ENCODE measurements at regions of chr18 and their contacts with region 1.

Region 1: DNA sequence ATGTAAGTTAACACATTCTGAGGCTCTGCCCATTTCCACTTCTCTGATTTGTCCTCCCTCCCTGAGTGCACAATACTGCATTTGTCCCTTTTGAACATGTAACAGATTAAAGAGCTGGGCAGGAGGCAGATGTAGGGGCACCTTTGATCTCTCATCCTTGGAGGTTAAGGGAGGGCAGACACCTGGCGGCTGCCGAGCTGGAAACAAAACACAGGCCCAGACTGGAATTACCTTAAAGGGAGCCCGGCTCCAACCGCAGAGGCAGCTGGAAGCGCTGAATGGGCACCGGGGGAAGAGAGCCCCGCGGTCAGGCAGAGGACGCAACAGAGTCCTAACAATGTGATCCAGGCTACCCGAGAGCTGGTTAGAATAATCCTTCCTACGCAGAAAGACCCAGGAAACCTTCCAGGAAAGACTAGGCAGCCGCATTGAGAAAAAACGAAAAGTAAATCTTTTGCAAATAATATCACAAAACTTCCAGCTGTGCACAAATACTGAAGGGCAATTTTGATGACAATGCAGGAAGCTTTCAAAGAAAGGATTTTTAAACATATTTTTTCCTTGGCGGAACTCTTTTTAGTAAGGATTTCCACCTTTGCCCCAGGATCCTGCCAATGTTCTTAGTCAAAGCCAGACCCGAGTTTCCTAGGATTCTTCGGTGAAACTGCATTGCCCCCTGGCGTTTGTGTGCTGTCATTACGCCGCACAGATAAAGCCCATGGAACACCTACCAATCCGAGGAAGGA is 216.0 kb downstream of the TGIF1 start:
- DNase-seq: peak; percentile 78 to 89
- H3K4me3 ChIP-seq: peak overlapping the region; percentile 45; the same call in 1 of the 2 replicates
- H3K27ac ChIP-seq: peak overlapping the region; percentile 96
- H3K4me1 ChIP-seq: peaks cover 33% of the 10 kb centered on the region
- H3K27me3 ChIP-seq: no peaks in the 10 kb centered on the region
- CTCF ChIP-seq: peak; percentile 97

Region 2: GRCh38 chr18:2932247-2933181 is 733.4 kb before region 1 on chr18:
- CTCF ChIA-PET with region 1: interaction called, 4 read pairs
- POLR2A ChIA-PET with region 1: no interaction called
- intact Hi-C with region 1: loop called (anchors 1 kb)
- DNase-seq: peak; percentile 32 to 52
- H3K4me3 ChIP-seq: no peak overlapping the region
- H3K27ac ChIP-seq: no peak overlapping the region
- H3K4me1 ChIP-seq: no peaks in the 10 kb centered on the region
- H3K27me3 ChIP-seq: no peaks in the 10 kb centered on the region
- CTCF ChIP-seq: peak; percentile 89

Region 3: GRCh38 chr18:3297025-3297984 is 368.6 kb before region 1 on chr18:
- CTCF ChIA-PET with region 1: no interaction called
- POLR2A ChIA-PET with region 1: interaction called, 44 read pairs
- intact Hi-C with region 1: no loop called
- DNase-seq: peak; percentile 94 to 95
- H3K4me3 ChIP-seq: peak overlapping the region; percentile 77
- H3K27ac ChIP-seq: peak overlapping the region; percentile 68
- H3K4me1 ChIP-seq: 0 out of 2 replicates have a peak, but pooled peaks cover 8% of the 10 kb centered on the region
- H3K27me3 ChIP-seq: no peaks in the 10 kb centered on the region
- CTCF ChIP-seq: peak; percentile 72

Region 4: GRCh38 chr18:3411854-3412268 is 254.1 kb before region 1 on chr18:
- CTCF ChIA-PET with region 1: interaction called, 3 read pairs
- POLR2A ChIA-PET with region 1: interaction called, 6 read pairs
- intact Hi-C with region 1: loop called (anchors 1 kb)
- DNase-seq: peak; percentile 72 to 86
- H3K4me3 ChIP-seq: peak overlapping the region; percentile 68
- H3K27ac ChIP-seq: peak overlapping the region; percentile 96
- H3K4me1 ChIP-seq: peaks cover 58% of the 10 kb centered on the region
- H3K27me3 ChIP-seq: no peaks in the 10 kb centered on the region
- CTCF ChIP-seq: no peak

Region 5: GRCh38 chr18:3547891-3548615 is 117.9 kb before region 1 on chr18:
- CTCF ChIA-PET with region 1: no interaction called
- POLR2A ChIA-PET with region 1: no interaction called
- intact Hi-C with region 1: no loop called
- DNase-seq: no peak
- H3K4me3 ChIP-seq: no peak overlapping the region
- H3K27ac ChIP-seq: no peak overlapping the region
- H3K4me1 ChIP-seq: no peaks in the 10 kb centered on the region
- H3K27me3 ChIP-seq: no peaks in the 10 kb centered on the region
- CTCF ChIP-seq: no peak

Region 6: DNA sequence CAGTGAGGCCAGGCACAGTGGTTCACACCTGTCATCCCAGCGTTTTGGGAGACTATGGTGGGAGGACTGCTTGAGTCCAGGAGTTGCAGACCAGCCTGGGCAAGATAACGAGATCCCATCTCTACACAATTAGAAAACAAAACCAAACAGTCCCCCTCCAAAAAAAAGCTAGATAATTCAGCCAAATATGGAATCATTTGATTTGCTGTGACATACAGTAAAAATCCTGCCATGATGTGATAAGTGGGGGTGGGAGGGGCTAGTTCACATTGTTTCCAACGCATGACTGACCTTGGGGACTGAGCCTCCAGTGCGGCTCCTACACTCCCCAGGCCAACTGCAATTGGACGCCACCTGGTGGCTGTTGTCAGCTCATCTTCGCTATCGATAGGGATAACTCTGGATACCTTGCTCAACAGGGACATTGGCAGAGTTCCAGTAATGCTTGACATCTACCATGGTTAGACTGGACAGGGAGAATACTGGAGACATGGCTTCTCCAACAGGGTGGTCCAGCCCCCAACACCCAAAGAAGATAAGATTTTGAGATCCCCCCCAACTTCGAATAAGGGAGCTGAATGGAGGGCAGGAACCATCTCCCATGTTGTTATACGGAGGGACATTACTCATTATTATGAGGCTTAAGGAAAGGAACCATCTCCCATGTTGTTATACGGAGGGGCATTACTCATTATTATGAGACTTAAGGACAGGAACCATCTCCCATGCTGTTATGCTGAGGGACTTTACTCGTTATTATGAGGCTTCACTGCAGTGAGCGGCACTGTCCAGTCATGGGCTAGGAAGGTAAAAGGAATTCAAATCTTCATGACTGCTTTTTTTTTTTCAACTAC is 80.1 kb before region 1 on chr18:
- CTCF ChIA-PET with region 1: interaction called, 13 read pairs
- POLR2A ChIA-PET with region 1: interaction called, 8 read pairs
- intact Hi-C with region 1: no loop called
- DNase-seq: peak; percentile 58 to 81
- H3K4me3 ChIP-seq: no peak overlapping the region
- H3K27ac ChIP-seq: no peak overlapping the region
- H3K4me1 ChIP-seq: peaks cover 33% of the 10 kb centered on the region; the same call in 1 of the 2 replicates
- H3K27me3 ChIP-seq: no peaks in the 10 kb centered on the region
- CTCF ChIP-seq: peak; percentile 67

Region 7: DNA sequence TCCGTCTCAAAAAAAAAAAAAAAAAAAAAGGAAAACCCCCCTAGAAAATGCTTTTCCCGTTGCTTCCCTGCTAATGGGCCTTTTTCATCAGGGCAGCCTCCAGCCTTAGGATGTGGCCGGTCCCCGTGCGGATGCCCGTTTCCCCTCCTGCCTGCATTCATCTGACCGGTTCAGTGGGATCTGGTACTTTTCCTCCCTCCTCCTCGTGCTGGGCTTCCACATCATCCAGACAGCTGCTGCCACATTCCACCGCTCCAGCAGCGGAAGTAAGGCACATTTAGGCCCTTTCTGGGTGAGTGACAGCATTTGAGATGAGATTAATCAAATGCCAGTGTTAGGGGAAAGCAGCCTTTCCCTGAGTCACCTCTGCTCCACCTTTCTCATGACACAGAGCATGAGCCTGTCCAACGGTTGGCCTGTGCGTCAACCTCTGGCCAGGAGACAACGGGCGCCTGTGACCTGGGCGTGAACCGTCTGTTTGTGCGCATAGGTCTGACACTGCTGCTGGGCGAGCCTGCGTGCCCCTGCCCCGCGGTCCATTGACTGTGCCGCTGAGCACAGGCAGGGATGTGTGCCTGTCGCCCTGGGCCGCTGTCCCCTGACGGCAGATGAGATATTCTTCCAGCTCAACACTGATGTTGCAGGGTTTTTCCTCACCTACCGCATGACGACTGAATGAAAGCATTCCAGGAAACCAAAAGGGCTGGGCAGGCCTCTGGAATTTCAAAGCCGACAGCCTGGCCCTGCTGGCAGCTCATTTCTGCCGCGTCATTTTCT is 42.0 kb before region 1 on chr18:
- CTCF ChIA-PET with region 1: interaction called, 8 read pairs
- POLR2A ChIA-PET with region 1: interaction called, 18 read pairs
- intact Hi-C with region 1: loop called (anchors 1 kb)
- DNase-seq: peak; percentile 94 to 98
- H3K4me3 ChIP-seq: peak overlapping the region; percentile 58
- H3K27ac ChIP-seq: peak overlapping the region; percentile 100
- H3K4me1 ChIP-seq: peaks cover 62% of the 10 kb centered on the region
- H3K27me3 ChIP-seq: no peaks in the 10 kb centered on the region
- CTCF ChIP-seq: no peak

Region 8: GRCh38 chr18:3869848-3870247 is 203.9 kb after region 1 on chr18:
- CTCF ChIA-PET with region 1: interaction called, 11 read pairs
- POLR2A ChIA-PET with region 1: no interaction called
- intact Hi-C with region 1: no loop called
- DNase-seq: no peak
- H3K4me3 ChIP-seq: no peak overlapping the region
- H3K27ac ChIP-seq: no peak overlapping the region
- H3K4me1 ChIP-seq: no peaks in the 10 kb centered on the region
- H3K27me3 ChIP-seq: no peaks in the 10 kb centered on the region
- CTCF ChIP-seq: peak; percentile 78

Region 9: GRCh38 chr18:3931542-3932112 is 265.7 kb after region 1 on chr18:
- CTCF ChIA-PET with region 1: no interaction called
- POLR2A ChIA-PET with region 1: no interaction called
- intact Hi-C with region 1: no loop called
- DNase-seq: no peak
- H3K4me3 ChIP-seq: no peak overlapping the region
- H3K27ac ChIP-seq: no peak overlapping the region
- H3K4me1 ChIP-seq: no peaks in the 10 kb centered on the region
- H3K27me3 ChIP-seq: no peaks in the 10 kb centered on the region
- CTCF ChIP-seq: no peak